ENCODE measurements at regions of chr13 and their contacts with region 1.

Region 1: DNA sequence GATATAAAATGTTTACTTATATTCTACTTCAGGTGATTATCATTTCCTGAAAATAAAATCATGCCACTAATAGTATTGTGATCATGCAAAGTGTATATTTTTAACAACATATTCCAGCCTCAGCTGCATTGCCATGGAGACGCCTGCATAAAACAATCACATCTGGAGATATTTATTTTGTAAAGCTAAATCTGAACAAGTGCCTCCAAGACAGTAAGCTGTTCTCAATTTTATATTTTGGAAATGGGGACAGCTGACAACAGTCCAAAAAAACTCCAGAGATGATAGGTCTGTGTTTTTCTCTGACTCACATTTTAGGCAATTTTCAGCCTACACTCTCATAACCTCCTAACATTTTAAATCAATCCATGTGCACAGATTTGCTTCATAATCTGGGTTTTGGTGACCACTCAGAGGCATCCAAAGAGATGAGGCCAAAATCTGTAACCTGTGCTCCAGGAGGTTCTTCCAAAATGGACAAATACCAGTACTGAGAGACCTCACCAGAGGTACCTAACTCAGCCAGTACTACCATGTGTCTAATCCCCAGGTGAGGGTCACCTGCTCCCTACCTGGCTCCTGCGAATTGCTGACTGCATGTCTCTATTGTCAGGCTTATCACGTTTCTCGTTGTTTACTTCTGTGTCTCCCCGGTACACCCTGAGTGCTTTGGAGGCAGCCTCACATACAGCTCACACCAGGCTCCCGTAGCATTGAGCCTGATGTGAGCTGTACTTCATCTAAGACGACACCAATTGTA is 62.7 kb downstream of the COL4A1 start:
- DNase-seq: no peak
- ATAC-seq: peak in 2 of 4 donors; percentile 23 to 33
- H3K4me3 ChIP-seq: no peak overlapping the region
- H3K27ac ChIP-seq: peak overlapping the region; percentile 30 to 84 (median 68)
- H3K4me1 ChIP-seq: peaks cover 10 to 99% (median 81%) of the 10 kb centered on the region in 12 donors
- H3K27me3 ChIP-seq: no peaks in the 10 kb centered on the region
- CTCF ChIP-seq: no peak
- POLR2A ChIP-seq: no peak

Region 2: DNA sequence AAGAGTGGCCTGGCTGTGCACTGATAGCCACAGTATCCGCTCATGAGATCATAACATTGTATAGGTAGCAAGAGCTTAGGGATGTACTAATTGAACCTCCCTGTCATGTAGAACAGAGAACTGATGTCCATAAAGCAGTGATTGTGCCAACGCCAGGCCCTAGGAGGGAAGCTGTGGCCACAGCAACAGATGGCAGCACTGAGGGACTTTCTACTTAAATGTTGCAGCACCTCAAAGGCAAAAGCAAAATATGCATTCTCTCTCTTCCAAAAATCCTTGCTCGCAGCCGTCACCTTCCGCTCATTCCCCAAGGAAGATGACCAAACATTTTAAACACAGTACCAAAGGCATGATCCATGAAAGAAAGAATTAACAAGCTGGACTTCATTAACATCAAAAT is 30.4 kb after region 1 on chr13:
- intact Hi-C with region 1: loop called in 1 of 10 experiments (anchors 5 kb)
- DNase-seq: peak in 1 of 5 donors; percentile 40
- ATAC-seq: peak in 3 of 4 donors; percentile 35 to 52 (median 43)
- H3K4me3 ChIP-seq: no peak overlapping the region
- H3K27ac ChIP-seq: peak overlapping the region in 3 of 12 donors; percentile 18 to 71 (median 47)
- H3K4me1 ChIP-seq: peaks cover 6 to 90% (median 65%) of the 10 kb centered on the region in 12 donors
- H3K27me3 ChIP-seq: no peaks in the 10 kb centered on the region
- CTCF ChIP-seq: peak in 11 of 12 donors; percentile 18 to 58 (median 41)
- POLR2A ChIP-seq: no peak

Region 3: GRCh38 chr13:110312339-110313031 is 68.2 kb after region 1 on chr13:
- intact Hi-C with region 1: loop called in 4 of 10 experiments (anchors 5 to 10 kb)
- DNase-seq: peak in 1 of 5 donors; percentile 14
- ATAC-seq: no peak
- H3K4me3 ChIP-seq: peak overlapping the region in 9 of 12 donors; percentile 67 to 93 (median 83)
- H3K27ac ChIP-seq: peak overlapping the region in 11 of 12 donors; percentile 50 to 99 (median 96)
- H3K4me1 ChIP-seq: peaks cover 17 to 90% (median 73%) of the 10 kb centered on the region in 12 donors
- H3K27me3 ChIP-seq: peaks cover 0 to 29% (median 0%) of the 10 kb centered on the region in 9 donors
- CTCF ChIP-seq: no peak
- POLR2A ChIP-seq: no peak

Measured in heart left ventricle (tissue), 16 donors.